CD4-positive, alpha-beta T cell (primary cell): ENCODE measurements at regions of chr7 and their contacts with region 1.

Region 1: GRCh38 chr7:73738612-73739374 is at the start of gene ABHD11:
- DNase-seq: peak; percentile 96 to 100 (median 99)
- ATAC-seq: peak; percentile 87
- H3K4me3 ChIP-seq: peak within 1 kb of the TSS; percentile 86
- H3K4me3 Mint-ChIP-seq: peak within 1 kb of the TSS; percentile 94
- H3K27ac ChIP-seq: peak within 1 kb of the TSS; percentile 69 to 85
- H3K27ac Mint-ChIP-seq: peak within 1 kb of the TSS; percentile 92
- H3K4me1 ChIP-seq: peaks cover 29% of the 10 kb centered on the region
- H3K4me1 Mint-ChIP-seq: peaks cover 17% of the 10 kb centered on the region
- H3K27me3 ChIP-seq: no peaks in the 10 kb centered on the region
- H3K27me3 Mint-ChIP-seq: no peaks in the 10 kb centered on the region
- CTCF ChIP-seq: no peak
- total RNA-seq, gene ABHD11: 8.5 to 11.5 TPM

Region 2: GRCh38 chr7:73522105-73522872 is 216.5 kb before region 1 on chr7 and contains the start of gene BAZ1B:
- CTCF ChIA-PET with region 1: interaction called, 9 read pairs
- POLR2A ChIA-PET with region 1: interaction called, 13 read pairs
- intact Hi-C with region 1: loop called in 1 of 2 experiments (anchors 2 kb)
- DNase-seq: peak; percentile 91 to 98 (median 96)
- ATAC-seq: peak; percentile 93
- H3K4me3 ChIP-seq: peak within 1 kb of the TSS; percentile 67
- H3K4me3 Mint-ChIP-seq: peak within 1 kb of the TSS; percentile 99
- H3K27ac ChIP-seq: peak within 1 kb of the TSS; percentile 87 to 92
- H3K27ac Mint-ChIP-seq: peak within 1 kb of the TSS; percentile 99
- H3K4me1 ChIP-seq: peaks cover 62% of the 10 kb centered on the region
- H3K4me1 Mint-ChIP-seq: peaks cover 74% of the 10 kb centered on the region
- H3K27me3 ChIP-seq: no peaks in the 10 kb centered on the region
- H3K27me3 Mint-ChIP-seq: no peaks in the 10 kb centered on the region
- CTCF ChIP-seq: no peak
- total RNA-seq, gene BAZ1B: 32.8 to 35.5 TPM

Region 3: GRCh38 chr7:73606801-73607691 is 131.7 kb before region 1 on chr7:
- CTCF ChIA-PET with region 1: interaction called, 49 read pairs
- POLR2A ChIA-PET with region 1: interaction called, 5 read pairs
- intact Hi-C with region 1: loop called in 1 of 2 experiments (anchors 2 kb)
- DNase-seq: peak; percentile 45 to 80 (median 60)
- ATAC-seq: peak; percentile 86
- H3K4me3 ChIP-seq: no peak overlapping the region
- H3K4me3 Mint-ChIP-seq: no peak overlapping the region
- H3K27ac ChIP-seq: no peak overlapping the region
- H3K27ac Mint-ChIP-seq: no peak overlapping the region
- H3K4me1 ChIP-seq: peaks cover 8% of the 10 kb centered on the region
- H3K4me1 Mint-ChIP-seq: no peaks in the 10 kb centered on the region
- H3K27me3 ChIP-seq: peaks cover 14% of the 10 kb centered on the region in 2 experiments
- H3K27me3 Mint-ChIP-seq: peaks cover 36% of the 10 kb centered on the region
- CTCF ChIP-seq: peak; percentile 97

Region 4: DNA sequence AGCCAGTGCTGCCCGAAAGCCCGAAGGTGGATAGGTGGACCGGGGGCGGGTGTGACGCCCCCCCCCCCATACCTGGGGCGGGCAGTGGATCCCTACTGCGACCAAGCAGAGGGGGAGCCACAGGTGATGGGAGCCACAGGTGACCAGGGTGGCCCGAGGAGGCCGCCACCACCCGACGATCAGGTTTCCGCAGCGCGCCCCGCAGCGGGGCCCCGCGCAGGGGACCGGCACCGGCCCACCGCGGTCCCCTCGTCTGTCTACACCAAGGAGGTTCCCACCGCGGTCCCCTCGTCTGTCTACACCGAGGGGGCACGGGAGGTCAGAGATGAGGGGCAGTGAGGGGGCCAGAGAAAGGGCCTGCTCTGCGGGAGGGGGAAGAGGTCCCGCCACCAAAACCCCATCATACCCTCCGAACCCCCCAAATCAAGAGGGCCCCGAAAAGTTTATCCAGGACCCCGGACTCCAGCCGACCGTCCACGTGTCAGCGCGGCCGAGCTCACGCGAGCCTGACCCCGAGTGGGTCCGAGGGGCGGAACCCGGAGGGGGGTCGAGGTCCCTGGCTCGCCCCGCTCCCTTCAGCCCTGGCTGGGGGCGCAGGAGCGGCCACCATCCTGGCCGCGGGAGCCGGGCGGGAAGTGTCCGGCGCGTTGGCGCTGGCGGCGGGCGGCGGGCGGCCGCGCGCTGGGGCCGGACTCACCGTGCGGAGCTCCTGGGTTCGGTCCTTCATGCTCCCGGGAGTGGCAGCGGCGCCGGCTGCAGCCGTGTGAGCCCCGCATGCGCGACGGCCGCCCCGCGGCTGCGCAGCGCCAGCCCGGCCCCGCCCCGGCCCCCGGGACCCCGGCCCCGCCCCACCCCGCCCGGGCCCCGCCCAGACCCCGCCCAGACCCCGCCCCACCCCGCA is 19.6 kb before region 1 on chr7 and contains the start of gene STX1A:
- CTCF ChIA-PET with region 1: interaction called, 13 read pairs
- POLR2A ChIA-PET with region 1: interaction called, 14 read pairs
- intact Hi-C with region 1: loop called (anchors 1 to 2 kb)
- DNase-seq: peak; percentile 40 to 89 (median 65)
- ATAC-seq: peak; percentile 80
- H3K4me3 ChIP-seq: peak within 1 kb of the TSS; percentile 75
- H3K4me3 Mint-ChIP-seq: peak within 1 kb of the TSS; percentile 95
- H3K27ac ChIP-seq: no peak within 1 kb of the TSS
- H3K27ac Mint-ChIP-seq: peak within 1 kb of the TSS; percentile 49
- H3K4me1 ChIP-seq: peaks cover 44% of the 10 kb centered on the region
- H3K4me1 Mint-ChIP-seq: peaks cover 16% of the 10 kb centered on the region
- H3K27me3 ChIP-seq: no peaks in the 10 kb centered on the region
- H3K27me3 Mint-ChIP-seq: peaks cover 4% of the 10 kb centered on the region
- CTCF ChIP-seq: no peak
- total RNA-seq, gene STX1A: 15.5 to 20.7 TPM

Region 5: GRCh38 chr7:73851410-73852234 is 112.8 kb after region 1 on chr7:
- CTCF ChIA-PET with region 1: interaction called, 5 read pairs
- POLR2A ChIA-PET with region 1: no interaction called
- intact Hi-C with region 1: loop called (anchors 5 kb)
- DNase-seq: peak in 3 of 14 experiments; percentile 44 to 69 (median 59)
- ATAC-seq: peak; percentile 74
- H3K4me3 ChIP-seq: no peak overlapping the region
- H3K4me3 Mint-ChIP-seq: peak overlapping the region; percentile 42
- H3K27ac ChIP-seq: no peak overlapping the region
- H3K27ac Mint-ChIP-seq: peak overlapping the region; percentile 63
- H3K4me1 ChIP-seq: peaks cover 15% of the 10 kb centered on the region
- H3K4me1 Mint-ChIP-seq: peaks cover 6% of the 10 kb centered on the region
- H3K27me3 ChIP-seq: peaks cover 0 to 6% of the 10 kb centered on the region in 2 experiments
- H3K27me3 Mint-ChIP-seq: peaks cover 20% of the 10 kb centered on the region
- CTCF ChIP-seq: no peak

Region 6: DNA sequence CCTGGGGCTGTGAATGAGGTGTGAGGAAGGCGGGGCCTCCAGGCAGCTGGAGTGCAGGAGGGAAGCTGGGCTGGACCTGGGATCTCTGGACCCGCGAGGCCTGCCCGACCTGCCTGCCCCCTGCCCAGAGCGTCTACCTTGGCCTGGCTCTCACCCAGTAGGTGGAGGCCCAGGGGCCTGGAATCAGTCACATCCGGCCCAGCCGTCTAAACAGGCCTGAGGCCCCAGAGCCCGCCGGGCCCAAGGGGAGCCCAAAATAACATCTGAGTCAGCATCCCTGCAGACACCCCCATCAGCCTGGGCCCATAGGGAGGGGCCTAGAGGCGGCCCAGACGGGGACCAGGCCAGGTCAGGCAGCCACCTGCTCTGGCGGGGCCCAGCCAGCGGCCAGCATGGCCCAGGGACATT is 274.1 kb after region 1 on chr7:
- CTCF ChIA-PET with region 1: no interaction called
- POLR2A ChIA-PET with region 1: no interaction called
- intact Hi-C with region 1: no loop called
- DNase-seq: no peak
- ATAC-seq: no peak
- H3K4me3 ChIP-seq: no peak overlapping the region
- H3K4me3 Mint-ChIP-seq: no peak overlapping the region
- H3K27ac ChIP-seq: no peak overlapping the region
- H3K27ac Mint-ChIP-seq: no peak overlapping the region
- H3K4me1 ChIP-seq: no peaks in the 10 kb centered on the region
- H3K4me1 Mint-ChIP-seq: no peaks in the 10 kb centered on the region
- H3K27me3 ChIP-seq: no peaks in the 10 kb centered on the region
- H3K27me3 Mint-ChIP-seq: no peaks in the 10 kb centered on the region
- CTCF ChIP-seq: no peak

Region 7: DNA sequence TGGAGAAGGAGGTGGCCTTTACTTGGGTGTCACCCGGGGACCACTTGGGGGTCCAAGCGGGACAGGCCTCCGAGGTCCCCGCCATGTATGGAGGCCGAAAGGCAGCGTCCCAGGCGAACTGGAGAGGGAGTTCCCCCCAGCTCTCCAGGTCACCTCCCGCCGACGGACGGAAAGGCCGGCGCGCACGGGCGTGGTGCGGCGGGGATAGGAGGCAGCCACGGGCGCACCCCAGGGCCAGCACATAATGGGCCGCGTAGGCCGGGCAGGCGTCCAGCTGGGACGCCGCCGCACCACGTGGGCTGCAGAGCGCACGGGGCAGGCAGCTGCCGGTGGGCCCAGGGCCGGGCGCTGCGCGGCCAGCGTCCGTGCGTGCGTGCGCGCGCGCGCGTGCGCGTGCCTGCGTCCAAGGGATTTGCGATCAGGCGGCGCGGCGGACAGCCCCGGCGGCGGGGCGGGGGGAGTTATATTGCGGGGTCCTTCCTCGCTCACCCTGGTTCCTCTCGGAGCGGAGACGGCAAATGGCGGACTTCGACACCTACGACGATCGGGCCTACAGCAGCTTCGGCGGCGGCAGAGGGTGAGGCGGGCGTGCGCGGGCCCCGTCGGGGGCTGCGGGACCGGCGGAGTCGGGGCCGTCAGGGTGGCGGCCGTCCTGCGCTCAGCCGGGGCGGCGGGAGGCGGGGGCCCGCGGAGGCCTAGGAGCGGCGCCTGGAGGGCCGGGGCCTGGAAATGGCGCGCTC is 435.2 kb after region 1 on chr7 and contains the start of gene EIF4H:
- CTCF ChIA-PET with region 1: no interaction called
- POLR2A ChIA-PET with region 1: no interaction called
- intact Hi-C with region 1: loop called in 1 of 2 experiments (anchors 10 kb)
- DNase-seq: peak; percentile 92 to 98 (median 95)
- ATAC-seq: peak; percentile 85
- H3K4me3 ChIP-seq: peak within 1 kb of the TSS; percentile 85
- H3K4me3 Mint-ChIP-seq: peak within 1 kb of the TSS; percentile 96
- H3K27ac ChIP-seq: peak within 1 kb of the TSS; percentile 61 to 75
- H3K27ac Mint-ChIP-seq: peak within 1 kb of the TSS; percentile 95
- H3K4me1 ChIP-seq: peaks cover 46% of the 10 kb centered on the region
- H3K4me1 Mint-ChIP-seq: peaks cover 53% of the 10 kb centered on the region
- H3K27me3 ChIP-seq: no peaks in the 10 kb centered on the region
- H3K27me3 Mint-ChIP-seq: no peaks in the 10 kb centered on the region
- CTCF ChIP-seq: no peak
- total RNA-seq, gene EIF4H: 311 to 316 TPM